CD8-positive, alpha-beta memory T cell (primary cell): ENCODE measurements at regions of chr1 and their contacts with region 1.

Region 1: DNA sequence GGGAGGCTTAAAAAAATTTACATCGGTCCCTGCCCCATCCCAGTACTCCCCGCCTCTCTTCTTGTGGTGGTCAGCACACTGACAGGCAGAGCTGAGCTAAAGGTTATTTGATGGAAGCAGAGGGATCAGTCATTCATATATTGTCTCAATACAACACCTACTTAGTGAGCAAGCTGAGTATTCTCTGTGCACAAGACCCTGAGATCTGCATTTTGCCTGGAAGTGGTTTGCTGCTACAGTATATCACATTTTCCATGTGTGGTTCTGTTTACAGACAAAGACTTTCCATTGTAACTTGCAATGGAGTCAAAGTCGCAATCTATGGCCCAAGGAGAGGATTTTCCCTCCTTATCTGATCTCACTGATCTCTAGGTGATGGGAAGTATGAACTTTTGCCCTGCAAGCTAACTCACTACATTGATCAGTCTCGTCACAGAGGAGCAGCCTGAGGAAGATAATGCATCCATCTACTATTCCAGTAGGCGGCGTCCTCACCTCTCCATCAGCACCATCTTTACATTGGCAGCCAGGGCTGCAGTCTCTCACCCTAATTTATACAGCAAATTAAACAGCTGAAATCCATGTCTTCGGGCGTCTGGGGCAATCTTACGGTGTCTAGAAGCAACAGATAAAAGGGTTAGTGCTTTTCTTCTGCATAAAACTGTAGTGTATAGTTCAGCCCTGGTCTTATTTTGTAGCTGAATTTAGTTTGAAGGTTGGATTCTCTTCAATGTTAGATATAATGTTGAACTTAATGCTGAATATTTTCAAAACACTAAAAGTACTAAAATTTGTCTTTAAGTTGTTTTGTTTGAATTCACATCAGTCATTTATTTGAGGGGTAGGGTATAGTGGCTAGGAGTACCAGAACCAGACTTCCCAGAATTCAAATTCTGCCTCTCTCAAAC is 3.2 kb upstream of the TRAF5 start:
- DNase-seq: peak; percentile 44 to 77 (median 56)
- H3K4me3 ChIP-seq: no peak overlapping the region
- H3K4me3 Mint-ChIP-seq: peak overlapping the region in 1 of 7 donors; percentile 70
- H3K27ac ChIP-seq: no peak overlapping the region
- H3K27ac Mint-ChIP-seq: peak overlapping the region in 2 of 8 donors; percentile 4 to 25
- H3K4me1 ChIP-seq: peaks cover 14% of the 10 kb centered on the region
- H3K4me1 Mint-ChIP-seq: peaks cover 30 to 51% (median 37%) of the 10 kb centered on the region in 3 donors
- H3K27me3 ChIP-seq: no peaks in the 10 kb centered on the region
- H3K27me3 Mint-ChIP-seq: no peaks in the 10 kb centered on the region

Region 2: GRCh38 chr1:211344152-211344618 is 20.8 kb after region 1 on chr1:
- CTCF ChIA-PET with region 1: interaction called, 33 read pairs
- POLR2A ChIA-PET with region 1: no interaction called
- DNase-seq: no peak
- H3K4me3 ChIP-seq: no peak overlapping the region
- H3K4me3 Mint-ChIP-seq: peak overlapping the region in 1 of 7 donors; percentile 41
- H3K27ac ChIP-seq: peak overlapping the region; percentile 7
- H3K27ac Mint-ChIP-seq: peak overlapping the region in 7 of 8 donors; percentile 6 to 81 (median 58)
- H3K4me1 ChIP-seq: peaks cover 76% of the 10 kb centered on the region
- H3K4me1 Mint-ChIP-seq: peaks cover 81 to 94% (median 91%) of the 10 kb centered on the region in 3 donors
- H3K27me3 ChIP-seq: no peaks in the 10 kb centered on the region
- H3K27me3 Mint-ChIP-seq: no peaks in the 10 kb centered on the region

Region 3: GRCh38 chr1:211381481-211382181 is 58.2 kb after region 1 on chr1:
- CTCF ChIA-PET with region 1: interaction called, 11 read pairs
- POLR2A ChIA-PET with region 1: interaction called, 6 read pairs
- DNase-seq: no peak
- H3K4me3 ChIP-seq: no peak overlapping the region
- H3K4me3 Mint-ChIP-seq: peak overlapping the region; percentile 83 to 97 (median 95)
- H3K27ac ChIP-seq: peak overlapping the region; percentile 91
- H3K27ac Mint-ChIP-seq: peak overlapping the region; percentile 48 to 99 (median 84)
- H3K4me1 ChIP-seq: peaks cover 16% of the 10 kb centered on the region
- H3K4me1 Mint-ChIP-seq: peaks cover 29 to 44% (median 42%) of the 10 kb centered on the region in 3 donors
- H3K27me3 ChIP-seq: no peaks in the 10 kb centered on the region
- H3K27me3 Mint-ChIP-seq: no peaks in the 10 kb centered on the region

Region 4: GRCh38 chr1:211476200-211476849 is 152.9 kb after region 1 on chr1:
- CTCF ChIA-PET with region 1: interaction called, 37 read pairs
- POLR2A ChIA-PET with region 1: interaction called, 5 read pairs
- DNase-seq: peak; percentile 58 to 84 (median 62)
- H3K4me3 ChIP-seq: no peak overlapping the region
- H3K4me3 Mint-ChIP-seq: no peak overlapping the region
- H3K27ac ChIP-seq: no peak overlapping the region
- H3K27ac Mint-ChIP-seq: no peak overlapping the region
- H3K4me1 ChIP-seq: no peaks in the 10 kb centered on the region
- H3K4me1 Mint-ChIP-seq: peaks cover 0 to 3% (median 2%) of the 10 kb centered on the region in 3 donors
- H3K27me3 ChIP-seq: no peaks in the 10 kb centered on the region
- H3K27me3 Mint-ChIP-seq: peaks cover 14 to 26% of the 10 kb centered on the region in 2 donors

Region 5: DNA sequence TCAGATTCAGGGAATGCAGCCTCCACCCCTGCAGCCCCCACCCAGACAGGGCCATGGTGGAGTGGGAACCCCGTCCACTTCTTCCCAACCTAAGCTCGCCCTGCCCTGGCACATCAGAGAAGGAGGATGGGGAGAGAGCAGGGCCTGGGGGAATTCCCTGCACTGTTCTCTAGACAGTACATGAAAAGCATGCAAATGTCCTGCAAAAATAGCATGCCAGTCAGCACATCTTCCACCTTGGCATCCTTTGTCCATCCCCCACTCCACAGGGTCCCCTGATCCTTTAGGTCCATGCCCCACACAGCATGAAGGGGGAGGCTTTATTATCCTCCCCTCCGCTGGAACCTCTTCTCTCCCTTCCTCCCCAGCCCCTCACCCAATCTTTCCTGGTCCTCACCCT is 203.6 kb after region 1 on chr1:
- CTCF ChIA-PET with region 1: no interaction called
- POLR2A ChIA-PET with region 1: no interaction called
- DNase-seq: no peak
- H3K4me3 ChIP-seq: no peak overlapping the region
- H3K4me3 Mint-ChIP-seq: no peak overlapping the region
- H3K27ac ChIP-seq: no peak overlapping the region
- H3K27ac Mint-ChIP-seq: no peak overlapping the region
- H3K4me1 ChIP-seq: no peaks in the 10 kb centered on the region
- H3K4me1 Mint-ChIP-seq: no peaks in the 10 kb centered on the region
- H3K27me3 ChIP-seq: no peaks in the 10 kb centered on the region
- H3K27me3 Mint-ChIP-seq: peaks cover 10 to 13% of the 10 kb centered on the region in 2 donors

Region 6: GRCh38 chr1:211715971-211716370 is 392.6 kb after region 1 on chr1:
- CTCF ChIA-PET with region 1: no interaction called
- POLR2A ChIA-PET with region 1: no interaction called
- DNase-seq: no peak
- H3K4me3 ChIP-seq: no peak overlapping the region
- H3K4me3 Mint-ChIP-seq: no peak overlapping the region
- H3K27ac ChIP-seq: no peak overlapping the region
- H3K27ac Mint-ChIP-seq: no peak overlapping the region
- H3K4me1 ChIP-seq: no peaks in the 10 kb centered on the region
- H3K4me1 Mint-ChIP-seq: no peaks in the 10 kb centered on the region
- H3K27me3 ChIP-seq: no peaks in the 10 kb centered on the region
- H3K27me3 Mint-ChIP-seq: no peaks in the 10 kb centered on the region

Region 7: GRCh38 chr1:211735208-211736170 is 412.1 kb after region 1 on chr1:
- CTCF ChIA-PET with region 1: no interaction called
- POLR2A ChIA-PET with region 1: no interaction called
- DNase-seq: no peak
- H3K4me3 ChIP-seq: no peak overlapping the region
- H3K4me3 Mint-ChIP-seq: no peak overlapping the region
- H3K27ac ChIP-seq: no peak overlapping the region
- H3K27ac Mint-ChIP-seq: no peak overlapping the region
- H3K4me1 ChIP-seq: peaks cover 34% of the 10 kb centered on the region
- H3K4me1 Mint-ChIP-seq: peaks cover 29 to 33% (median 30%) of the 10 kb centered on the region in 3 donors
- H3K27me3 ChIP-seq: no peaks in the 10 kb centered on the region
- H3K27me3 Mint-ChIP-seq: peaks cover 0 to 2% of the 10 kb centered on the region in 2 donors